Endothelial cell of umbilical vein (primary cell): ENCODE measurements at regions of chr14 and their contacts with region 1.

Region 1: DNA sequence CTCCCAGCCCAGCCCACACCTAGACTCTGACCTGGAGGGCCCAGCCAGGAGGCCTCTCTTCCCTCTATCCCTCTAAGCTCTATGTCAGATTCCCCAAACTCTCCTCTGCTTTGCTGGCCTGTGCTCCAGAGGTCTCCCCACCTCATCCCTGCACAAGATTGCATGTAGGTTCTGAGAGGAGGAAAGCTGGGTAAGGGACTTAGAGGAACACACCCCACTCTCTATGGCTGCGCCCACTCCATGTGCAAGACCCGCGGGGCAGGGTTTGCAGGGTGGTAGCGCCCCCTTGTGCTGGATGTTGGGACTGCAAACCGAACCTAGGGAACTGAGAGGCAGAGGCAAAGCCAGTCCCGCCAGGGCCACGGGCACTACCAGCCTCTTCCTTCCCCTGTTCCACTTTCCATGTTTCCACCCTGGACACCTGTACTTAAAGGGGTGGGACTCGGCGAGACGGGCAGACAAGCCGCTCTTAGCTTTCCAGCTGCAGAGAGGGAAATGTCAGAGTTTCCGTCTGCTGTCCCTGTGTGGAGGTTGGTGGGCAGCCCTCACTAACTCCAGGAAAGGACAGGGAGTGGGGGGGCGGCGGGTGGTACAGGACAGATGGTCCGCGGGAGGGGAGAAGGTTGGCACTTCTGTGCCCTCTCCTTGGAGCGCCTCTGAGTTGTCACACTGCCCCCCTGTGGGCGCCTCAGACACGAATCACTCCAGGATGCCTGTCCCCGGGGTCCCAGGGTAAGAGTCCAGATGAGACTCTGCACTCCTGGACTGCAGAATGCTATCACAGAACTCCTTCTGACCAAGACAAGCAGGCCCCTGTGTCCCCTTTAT is 16.8 kb downstream of the MMP14 start:
- DNase-seq: peak; percentile 85
- H3K4me3 ChIP-seq: peak overlapping the region in 2 of 3 experiments; percentile 32 to 52
- H3K27ac ChIP-seq: peak overlapping the region; percentile 98
- H3K4me1 ChIP-seq: peaks cover 49% of the 10 kb centered on the region
- H3K27me3 ChIP-seq: no peaks in the 10 kb centered on the region
- CTCF ChIP-seq: peak; percentile 85 to 93
- POLR2A ChIP-seq: no peak

Region 2: GRCh38 chr14:22472935-22473854 is 380.0 kb before region 1 on chr14:
- CTCF ChIA-PET with region 1: interaction called, 4 read pairs
- POLR2A ChIA-PET with region 1: no interaction called
- dilution Hi-C with region 1: no loop called
- intact Hi-C with region 1: loop called (anchors 10 kb)
- DNase-seq: peak; percentile 72
- H3K4me3 ChIP-seq: no peak overlapping the region
- H3K27ac ChIP-seq: no peak overlapping the region
- H3K4me1 ChIP-seq: peaks cover 20% of the 10 kb centered on the region
- H3K27me3 ChIP-seq: peaks cover 0 to 5% of the 10 kb centered on the region in 2 experiments
- CTCF ChIP-seq: peak; percentile 49 to 52
- POLR2A ChIP-seq: no peak

Region 3: DNA sequence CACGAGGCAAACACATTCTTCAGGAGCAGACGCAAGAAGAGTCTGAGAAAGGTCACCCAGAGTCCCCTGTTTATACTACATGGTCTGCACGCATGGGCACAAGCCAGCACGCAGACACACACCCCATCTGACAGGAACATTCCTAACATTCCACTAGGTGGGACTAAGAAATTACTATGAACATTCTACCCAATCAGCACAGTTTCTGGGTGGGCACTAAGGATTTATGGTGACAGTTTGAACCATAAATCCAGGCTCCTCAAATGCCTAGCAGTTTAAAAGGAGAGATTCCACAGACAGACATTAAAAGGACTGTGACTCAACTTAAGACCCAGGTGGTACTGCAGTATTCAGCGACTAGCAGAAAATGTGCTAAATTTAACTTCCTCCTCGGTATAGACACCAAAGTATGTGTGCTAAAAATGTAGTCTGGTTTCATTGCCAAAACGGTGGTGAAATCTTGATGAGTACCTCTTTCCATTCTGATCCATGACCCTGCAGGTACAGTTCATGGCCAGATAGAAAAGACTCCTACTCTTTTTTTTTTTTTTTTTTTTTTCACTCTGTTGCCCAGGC is 238.8 kb before region 1 on chr14:
- CTCF ChIA-PET with region 1: interaction called, 3 read pairs
- POLR2A ChIA-PET with region 1: no interaction called
- dilution Hi-C with region 1: no loop called
- intact Hi-C with region 1: loop called (anchors 1 kb)
- DNase-seq: peak; percentile 99
- H3K4me3 ChIP-seq: no peak overlapping the region
- H3K27ac ChIP-seq: peak overlapping the region; percentile 91
- H3K4me1 ChIP-seq: peaks cover 20% of the 10 kb centered on the region
- H3K27me3 ChIP-seq: no peaks in the 10 kb centered on the region
- CTCF ChIP-seq: no peak
- POLR2A ChIP-seq: peak; percentile 56

Region 4: DNA sequence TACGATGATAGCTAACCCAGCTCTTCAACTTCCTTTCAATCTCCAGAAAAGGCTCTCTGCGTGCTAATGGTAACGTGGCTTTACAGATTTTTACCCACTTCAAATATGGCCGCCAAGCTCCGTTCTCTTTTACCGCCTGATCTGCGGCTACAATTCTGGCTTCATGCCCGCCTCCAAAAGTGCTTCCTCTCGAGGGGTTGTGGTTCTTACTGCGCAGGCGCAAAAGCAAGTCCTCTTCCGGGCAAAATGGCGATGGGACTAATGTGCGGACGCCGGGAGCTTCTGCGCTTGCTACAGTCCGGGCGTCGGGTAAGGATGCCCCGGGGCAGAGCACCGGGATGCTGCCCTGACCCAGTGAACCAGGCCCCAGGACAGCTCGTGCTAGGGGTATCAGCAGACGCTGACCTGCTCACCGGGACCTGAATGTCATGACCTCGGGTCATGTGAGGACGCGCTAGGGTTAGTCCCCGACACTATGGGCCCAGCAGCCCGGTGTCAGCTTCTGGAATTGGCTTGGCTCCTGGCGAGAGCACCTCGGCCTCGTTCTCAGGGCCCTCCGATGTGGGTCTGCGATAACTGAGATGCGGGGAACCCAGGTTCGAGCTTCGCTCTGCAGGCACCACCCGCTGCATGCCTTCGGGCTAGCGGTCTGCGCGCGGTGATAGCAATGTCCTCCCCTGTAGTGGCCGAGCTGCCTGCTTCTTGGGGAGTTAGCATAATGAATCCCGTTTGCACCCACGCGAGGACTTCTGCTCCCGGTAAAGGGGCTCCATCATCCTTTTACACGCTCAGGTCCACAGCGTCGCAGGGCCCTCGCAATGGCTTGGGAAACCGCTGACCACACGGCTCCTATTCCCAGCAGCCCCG is 86.5 kb before region 1 on chr14 and contains the start of gene OXA1L:
- CTCF ChIA-PET with region 1: interaction called, 9 read pairs
- POLR2A ChIA-PET with region 1: no interaction called
- dilution Hi-C with region 1: no loop called
- intact Hi-C with region 1: loop called (anchors 2 kb)
- DNase-seq: peak; percentile 98
- H3K4me3 ChIP-seq: peak within 1 kb of the TSS; percentile 77 to 99 (median 92)
- H3K27ac ChIP-seq: peak within 1 kb of the TSS; percentile 84
- H3K4me1 ChIP-seq: peaks cover 24% of the 10 kb centered on the region
- H3K27me3 ChIP-seq: no peaks in the 10 kb centered on the region
- CTCF ChIP-seq: no peak
- POLR2A ChIP-seq: peak; percentile 81
- total RNA-seq, gene OXA1L: 200 and 212 TPM in 2 replicates

Region 5: DNA sequence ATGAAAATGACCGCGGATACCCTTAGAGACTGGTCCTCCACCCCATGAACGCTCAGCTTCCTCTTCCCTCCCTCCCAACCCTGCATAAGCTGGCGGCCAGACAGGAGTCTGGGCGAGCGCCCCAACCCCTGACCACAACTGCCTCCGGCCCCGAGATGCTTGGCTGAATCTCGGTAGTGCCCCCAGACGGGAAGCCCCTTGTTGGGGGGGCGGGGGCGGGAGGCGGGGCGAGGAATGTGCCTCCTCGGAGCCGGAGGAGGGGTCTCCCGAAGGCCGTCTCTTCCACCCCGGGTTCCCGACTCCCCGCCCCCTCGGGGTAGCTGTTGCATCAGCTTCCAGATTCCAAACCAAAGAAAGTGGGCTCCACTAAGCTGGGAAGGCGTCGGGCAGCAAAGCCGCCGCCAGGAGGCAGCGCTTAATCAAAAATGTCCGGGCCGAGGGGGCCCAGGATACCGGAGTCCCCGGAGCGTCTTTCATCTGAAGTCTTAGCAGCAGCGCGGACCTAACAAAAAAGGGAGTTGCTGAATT is 30.5 kb before region 1 on chr14:
- CTCF ChIA-PET with region 1: interaction called, 313 read pairs
- POLR2A ChIA-PET with region 1: interaction called, 15 read pairs
- dilution Hi-C with region 1: no loop called
- intact Hi-C with region 1: loop called (anchors 1 kb)
- DNase-seq: peak; percentile 91
- H3K4me3 ChIP-seq: peak overlapping the region; percentile 14 to 57 (median 32)
- H3K27ac ChIP-seq: peak overlapping the region; percentile 68
- H3K4me1 ChIP-seq: peaks cover 47% of the 10 kb centered on the region
- H3K27me3 ChIP-seq: no peaks in the 10 kb centered on the region
- CTCF ChIP-seq: peak; percentile 86 to 88
- POLR2A ChIP-seq: no peak

Region 6: GRCh38 chr14:22836301-22837113 is 16.6 kb before region 1 on chr14 and contains the start of gene MMP14:
- CTCF ChIA-PET with region 1: interaction called, 214 read pairs
- POLR2A ChIA-PET with region 1: interaction called, 9 read pairs
- dilution Hi-C with region 1: no loop called
- intact Hi-C with region 1: loop called (anchors 1 kb)
- DNase-seq: peak; percentile 92
- H3K4me3 ChIP-seq: peak within 1 kb of the TSS; percentile 75 to 94 (median 86)
- H3K27ac ChIP-seq: peak within 1 kb of the TSS; percentile 84
- H3K4me1 ChIP-seq: peaks cover 32% of the 10 kb centered on the region
- H3K27me3 ChIP-seq: no peaks in the 10 kb centered on the region
- CTCF ChIP-seq: peak; percentile 26 to 54
- POLR2A ChIP-seq: peak; percentile 95
- total RNA-seq, gene MMP14: 603 and 615 TPM in 2 replicates

Region 7: DNA sequence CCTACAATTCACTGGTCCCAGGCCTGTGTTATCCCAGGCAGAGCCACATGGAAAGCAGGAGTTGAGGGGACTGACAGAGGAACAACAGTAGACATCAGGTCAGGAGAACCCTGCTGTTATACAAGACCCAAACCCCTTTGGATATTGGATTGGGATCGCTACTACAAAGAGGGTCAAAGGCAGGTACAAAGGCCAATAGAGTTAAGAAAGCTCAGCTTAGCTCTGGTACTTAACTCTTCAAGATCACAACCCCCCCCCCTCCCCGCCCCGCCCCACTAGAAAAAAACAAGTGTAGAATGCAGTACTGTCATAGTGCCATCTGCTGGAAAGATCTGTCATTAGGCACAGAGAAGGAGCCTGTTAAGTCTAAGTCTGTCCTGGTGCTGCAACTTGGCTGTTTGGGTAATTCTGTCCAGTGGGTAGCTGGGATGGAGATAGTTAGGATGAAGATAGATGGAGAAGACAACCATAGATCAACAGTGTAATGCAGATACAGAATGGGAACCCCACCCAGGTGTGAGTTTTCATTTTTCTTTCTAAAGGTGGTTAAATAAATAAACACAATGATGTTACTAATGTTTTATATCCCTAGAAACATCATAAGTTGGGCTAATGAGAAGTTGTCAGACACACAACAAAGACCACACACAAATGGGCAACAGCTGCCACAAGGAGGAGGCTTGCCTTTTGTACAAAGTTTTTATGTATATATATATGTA is 47.1 kb after region 1 on chr14:
- CTCF ChIA-PET with region 1: interaction called, 9 read pairs
- POLR2A ChIA-PET with region 1: no interaction called
- dilution Hi-C with region 1: no loop called
- intact Hi-C with region 1: loop called (anchors 1 kb)
- DNase-seq: peak; percentile 70
- H3K4me3 ChIP-seq: no peak overlapping the region
- H3K27ac ChIP-seq: no peak overlapping the region
- H3K4me1 ChIP-seq: no peaks in the 10 kb centered on the region
- H3K27me3 ChIP-seq: no peaks in the 10 kb centered on the region
- CTCF ChIP-seq: peak; percentile 38 to 65
- POLR2A ChIP-seq: no peak

Region 8: GRCh38 chr14:23114669-23115491 is 261.7 kb after region 1 on chr14:
- CTCF ChIA-PET with region 1: no interaction called
- POLR2A ChIA-PET with region 1: no interaction called
- dilution Hi-C with region 1: no loop called
- intact Hi-C with region 1: no loop called
- DNase-seq: peak; percentile 67
- H3K4me3 ChIP-seq: no peak overlapping the region
- H3K27ac ChIP-seq: peak overlapping the region; percentile 75
- H3K4me1 ChIP-seq: peaks cover 13% of the 10 kb centered on the region
- H3K27me3 ChIP-seq: peaks cover 9 to 10% of the 10 kb centered on the region in 2 experiments
- CTCF ChIP-seq: no peak
- POLR2A ChIP-seq: no peak

Region 9: DNA sequence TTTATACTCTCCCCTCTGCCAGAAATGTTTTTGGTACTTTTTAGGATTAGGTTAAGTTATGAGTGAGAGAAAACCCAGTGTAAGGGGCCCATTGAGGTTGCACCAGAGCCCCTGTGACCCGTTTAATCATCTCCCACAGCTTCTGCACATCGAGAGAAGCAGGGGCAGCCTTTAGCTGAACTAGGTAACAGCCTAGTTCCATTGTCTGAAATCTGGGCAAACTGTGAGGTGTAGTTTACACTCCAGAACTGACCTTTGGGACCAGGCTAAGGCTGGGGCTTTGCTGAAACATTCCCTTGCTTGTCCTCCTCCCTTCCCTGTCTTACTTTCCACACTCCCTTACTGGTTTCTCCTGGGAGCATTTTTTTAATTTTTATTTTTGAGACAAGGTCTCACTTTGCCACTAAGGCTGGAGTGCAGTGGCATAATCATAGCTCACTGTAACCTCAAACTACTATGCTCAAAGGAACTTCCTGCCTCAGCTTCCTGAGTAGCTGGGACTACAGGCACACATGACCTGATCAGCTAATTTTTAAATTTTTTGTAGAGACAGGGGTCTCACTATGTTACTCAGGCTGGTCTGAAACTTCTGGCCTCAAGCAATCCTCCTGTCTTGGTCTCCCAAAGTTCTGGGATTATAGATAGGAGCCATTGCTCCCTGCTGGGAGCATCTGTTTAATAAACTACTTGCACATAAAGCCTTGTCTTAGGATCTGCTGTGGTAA is 757.1 kb after region 1 on chr14:
- CTCF ChIA-PET with region 1: no interaction called
- POLR2A ChIA-PET with region 1: no interaction called
- dilution Hi-C with region 1: no loop called
- intact Hi-C with region 1: no loop called
- DNase-seq: no peak
- H3K4me3 ChIP-seq: no peak overlapping the region
- H3K27ac ChIP-seq: no peak overlapping the region
- H3K4me1 ChIP-seq: no peaks in the 10 kb centered on the region
- H3K27me3 ChIP-seq: no peaks in the 10 kb centered on the region
- CTCF ChIP-seq: no peak
- POLR2A ChIP-seq: no peak